ENCODE measurements at regions of chr17 and their contacts with region 1.

Region 1: DNA sequence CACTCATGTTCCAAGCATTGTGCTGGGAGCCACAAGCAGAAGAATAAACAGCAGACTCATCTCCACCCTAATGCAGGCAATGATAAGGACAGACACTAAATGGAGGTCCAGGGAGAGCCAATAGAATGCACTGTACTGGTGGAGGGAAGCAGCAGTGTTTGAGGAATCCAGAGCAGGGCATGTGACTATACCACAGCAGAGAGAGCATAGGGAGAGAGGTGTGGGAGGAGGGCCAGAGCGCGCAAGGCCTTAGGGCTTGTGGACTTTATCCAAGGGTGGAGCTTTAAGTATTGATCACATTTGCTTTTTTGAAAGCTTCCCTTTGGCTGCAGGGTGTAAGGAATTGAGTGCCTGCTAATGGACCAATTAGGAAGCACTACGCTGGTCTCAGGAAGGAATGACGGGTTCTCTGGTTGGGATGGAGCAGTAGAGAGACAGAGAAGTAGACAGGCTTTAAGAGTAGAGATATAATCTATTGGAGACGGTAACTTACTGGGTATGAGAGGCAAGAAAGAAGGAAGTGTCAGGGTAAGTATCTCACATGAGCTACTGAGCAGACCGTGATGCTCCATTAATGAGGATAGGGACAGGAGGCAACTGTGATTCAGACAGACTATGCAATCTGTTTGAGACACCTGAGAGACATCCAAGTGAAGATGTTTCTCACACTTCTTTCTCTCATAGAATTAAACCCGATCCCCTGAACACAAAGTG is 82.2 kb downstream of the MYO1D start:
- DNase-seq: peak; percentile 39
- H3K4me3 ChIP-seq: no peak overlapping the region
- H3K27ac ChIP-seq: peak overlapping the region; percentile 92
- H3K4me1 ChIP-seq: peaks cover 57% of the 10 kb centered on the region
- H3K27me3 ChIP-seq: no peaks in the 10 kb centered on the region
- CTCF ChIP-seq: no peak
- POLR2A ChIP-seq: no peak

Region 2: GRCh38 chr17:32440722-32441121 is 354.0 kb before region 1 on chr17:
- CTCF ChIA-PET with region 1: no interaction called
- POLR2A ChIA-PET with region 1: no interaction called
- dilution Hi-C with region 1: no loop called
- intact Hi-C with region 1: no loop called
- DNase-seq: no peak
- H3K4me3 ChIP-seq: no peak overlapping the region
- H3K27ac ChIP-seq: no peak overlapping the region
- H3K4me1 ChIP-seq: peaks cover 11% of the 10 kb centered on the region
- H3K27me3 ChIP-seq: peaks cover 10 to 11% of the 10 kb centered on the region in 2 experiments
- CTCF ChIP-seq: no peak
- POLR2A ChIP-seq: no peak

Region 3: GRCh38 chr17:32854207-32854606 is 59.5 kb after region 1 on chr17:
- CTCF ChIA-PET with region 1: interaction called, 5 read pairs
- POLR2A ChIA-PET with region 1: no interaction called
- dilution Hi-C with region 1: no loop called
- intact Hi-C with region 1: loop called (anchors 2 kb)
- DNase-seq: peak; percentile 74
- H3K4me3 ChIP-seq: peak overlapping the region in 1 of 3 experiments; percentile 30
- H3K27ac ChIP-seq: peak overlapping the region; percentile 38
- H3K4me1 ChIP-seq: peaks cover 26% of the 10 kb centered on the region
- H3K27me3 ChIP-seq: no peaks in the 10 kb centered on the region
- CTCF ChIP-seq: no peak
- POLR2A ChIP-seq: no peak

Region 4: DNA sequence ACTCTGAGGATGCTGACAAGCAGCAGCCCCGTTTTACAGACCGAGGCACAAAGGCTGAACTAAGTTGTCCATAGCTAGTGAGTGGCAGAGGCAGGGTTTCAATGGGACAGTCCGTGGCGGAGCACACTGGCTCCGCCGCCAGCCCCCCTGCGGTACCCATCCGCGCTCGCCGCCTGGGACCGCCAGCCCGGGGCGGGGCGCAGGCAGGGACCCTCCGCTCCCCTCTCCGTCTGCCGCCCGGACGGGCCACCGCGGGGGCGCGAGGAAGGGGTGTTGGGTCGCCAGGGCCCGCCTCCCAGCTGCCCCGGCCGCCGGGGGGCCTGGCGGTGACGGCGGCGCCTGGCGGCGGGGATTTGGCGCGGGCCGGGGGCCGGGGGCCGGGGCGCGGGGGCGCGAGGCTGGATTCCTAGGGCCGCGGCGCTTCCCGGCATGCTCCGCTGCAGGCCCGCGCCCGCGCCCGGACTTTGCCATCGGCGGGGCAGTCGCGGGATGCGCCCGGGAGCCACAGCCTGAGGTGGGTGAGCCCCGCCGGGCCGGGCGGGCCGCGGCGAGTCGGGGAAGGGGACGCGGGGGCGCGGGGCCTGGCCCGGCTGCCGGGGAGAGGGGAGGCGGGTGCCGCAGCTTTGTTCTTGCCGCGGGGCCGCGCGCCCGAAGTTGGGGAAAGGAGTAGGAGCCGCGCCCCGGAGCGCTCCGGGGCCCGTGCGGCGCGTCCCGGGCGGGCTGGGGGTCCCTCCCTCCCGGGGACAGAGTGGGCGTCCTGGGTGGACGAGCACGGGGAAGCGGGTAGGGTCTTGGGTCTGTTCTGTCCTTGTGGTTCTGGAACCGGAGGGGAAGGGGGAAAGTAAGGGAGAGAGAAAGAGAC is 133.3 kb after region 1 on chr17 and contains the start of gene TMEM98:
- CTCF ChIA-PET with region 1: no interaction called
- POLR2A ChIA-PET with region 1: no interaction called
- dilution Hi-C with region 1: no loop called
- intact Hi-C with region 1: no loop called
- DNase-seq: no peak
- H3K4me3 ChIP-seq: peak within 1 kb of the TSS; percentile 40 to 78 (median 73)
- H3K27ac ChIP-seq: peak within 1 kb of the TSS; percentile 36
- H3K4me1 ChIP-seq: peaks cover 31% of the 10 kb centered on the region
- H3K27me3 ChIP-seq: no peaks in the 10 kb centered on the region
- CTCF ChIP-seq: no peak
- POLR2A ChIP-seq: no peak
- total RNA-seq, gene TMEM98: 83.6 and 101 TPM in 2 replicates